ENCODE measurements at regions of chr7 and their contacts with region 1.

Region 1: GRCh38 chr7:124196519-124196918 is 163.7 kb upstream of the TMEM229A start:
- DNase-seq: no peak
- H3K4me3 ChIP-seq: no peak overlapping the region
- H3K27ac ChIP-seq: no peak overlapping the region
- H3K4me1 ChIP-seq: no peaks in the 10 kb centered on the region
- H3K27me3 ChIP-seq: no peaks in the 10 kb centered on the region
- CTCF ChIP-seq: no peak

Region 2: GRCh38 chr7:124171068-124171467 is 25.5 kb before region 1 on chr7:
- intact Hi-C with region 1: no loop called
- DNase-seq: no peak
- H3K4me3 ChIP-seq: no peak overlapping the region
- H3K27ac ChIP-seq: no peak overlapping the region
- H3K4me1 ChIP-seq: no peaks in the 10 kb centered on the region
- H3K27me3 ChIP-seq: no peaks in the 10 kb centered on the region
- CTCF ChIP-seq: no peak

Region 3: DNA sequence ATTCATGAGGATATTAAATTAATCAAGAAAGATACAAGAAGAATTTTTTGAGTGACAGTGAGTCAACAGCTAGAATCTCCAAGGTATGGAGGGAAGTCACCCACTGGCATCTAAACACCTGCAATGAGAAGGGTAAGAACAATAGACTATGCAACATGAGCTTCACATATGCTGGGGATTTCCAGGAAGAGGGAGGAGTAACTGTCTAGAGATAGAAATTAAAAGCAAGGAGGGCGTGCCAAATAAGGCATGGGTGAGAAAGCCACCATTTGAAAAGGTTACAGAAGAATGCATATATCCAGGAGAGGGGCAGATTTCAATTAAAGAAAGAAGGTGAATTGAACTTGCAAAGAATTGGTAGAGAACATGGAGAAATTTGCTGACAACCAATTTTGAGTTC is 203.4 kb after region 1 on chr7:
- intact Hi-C with region 1: no loop called
- DNase-seq: no peak
- H3K4me3 ChIP-seq: no peak overlapping the region
- H3K27ac ChIP-seq: no peak overlapping the region
- H3K4me1 ChIP-seq: no peaks in the 10 kb centered on the region
- H3K27me3 ChIP-seq: no peaks in the 10 kb centered on the region
- CTCF ChIP-seq: no peak

Region 4: GRCh38 chr7:125668321-125669013 is 1471.9 kb after region 1 on chr7:
- intact Hi-C with region 1: loop called (anchors 5 kb)
- DNase-seq: no peak
- H3K4me3 ChIP-seq: no peak overlapping the region
- H3K27ac ChIP-seq: no peak overlapping the region
- H3K4me1 ChIP-seq: no peaks in the 10 kb centered on the region
- H3K27me3 ChIP-seq: no peaks in the 10 kb centered on the region
- CTCF ChIP-seq: no peak